Uterus (tissue), 4 donors: ENCODE measurements at regions of chr6 and their contacts with region 1.

Region 1: GRCh38 chr6:37207903-37208456 is 38.0 kb downstream of the PIM1 start:
- DNase-seq: peak; percentile 60
- H3K4me3 ChIP-seq: no peak overlapping the region
- H3K27ac ChIP-seq: no peak overlapping the region
- H3K4me1 ChIP-seq: no peaks in the 10 kb centered on the region
- H3K27me3 ChIP-seq: no peaks in the 10 kb centered on the region
- CTCF ChIP-seq: peak; percentile 13 to 53 (median 47)
- POLR2A ChIP-seq: no peak

Region 2: GRCh38 chr6:37029249-37029971 is 178.6 kb before region 1 on chr6:
- intact Hi-C with region 1: loop called (anchors 10 kb)
- DNase-seq: peak; percentile 69 to 74
- H3K4me3 ChIP-seq: no peak overlapping the region
- H3K27ac ChIP-seq: no peak overlapping the region
- H3K4me1 ChIP-seq: no peaks in the 10 kb centered on the region
- H3K27me3 ChIP-seq: no peaks in the 10 kb centered on the region
- CTCF ChIP-seq: peak; percentile 66 to 85 (median 76)
- POLR2A ChIP-seq: no peak

Region 3: GRCh38 chr6:37353761-37354525 is 146.0 kb after region 1 on chr6 and contains the start of gene RNF8:
- intact Hi-C with region 1: no loop called
- DNase-seq: peak; percentile 89 to 91
- H3K4me3 ChIP-seq: peak within 1 kb of the TSS; percentile 73 to 93
- H3K27ac ChIP-seq: peak within 1 kb of the TSS; percentile 70 to 71
- H3K4me1 ChIP-seq: no peaks in the 10 kb centered on the region
- H3K27me3 ChIP-seq: no peaks in the 10 kb centered on the region
- CTCF ChIP-seq: no peak
- POLR2A ChIP-seq: peak; percentile 28 to 59
- total RNA-seq, gene RNF8: 5.9 to 42.6 (median 19.1) TPM